Thyroid gland (tissue), 4 donors: ENCODE measurements at regions of chr10 and their contacts with region 1.

Region 1: GRCh38 chr10:114631666-114632417 is 26.2 kb downstream of the ABLIM1 start:
- DNase-seq: peak; percentile 50 to 57
- H3K4me3 ChIP-seq: peak overlapping the region; percentile 15 to 43 (median 32)
- H3K27ac ChIP-seq: peak overlapping the region in 2 of 3 donors; percentile 92 to 95
- H3K4me1 ChIP-seq: peaks cover 33 to 47% of the 10 kb centered on the region in 2 donors
- H3K27me3 ChIP-seq: no peaks in the 10 kb centered on the region
- CTCF ChIP-seq: no peak
- POLR2A ChIP-seq: no peak

Region 2: GRCh38 chr10:114694752-114695151 is 62.9 kb after region 1 on chr10:
- intact Hi-C with region 1: loop called (anchors 10 kb)
- DNase-seq: peak in 1 of 2 donors; percentile 22
- H3K4me3 ChIP-seq: no peak overlapping the region
- H3K27ac ChIP-seq: no peak overlapping the region
- H3K4me1 ChIP-seq: peaks cover 11 to 32% of the 10 kb centered on the region in 2 donors
- H3K27me3 ChIP-seq: no peaks in the 10 kb centered on the region
- CTCF ChIP-seq: peak in 3 of 6 experiments; percentile 23 to 30 (median 28)
- POLR2A ChIP-seq: no peak

Region 3: GRCh38 chr10:115882021-115882420 is 1250.2 kb after region 1 on chr10:
- intact Hi-C with region 1: no loop called
- DNase-seq: no peak
- H3K4me3 ChIP-seq: no peak overlapping the region
- H3K27ac ChIP-seq: no peak overlapping the region
- H3K4me1 ChIP-seq: no peaks in the 10 kb centered on the region
- H3K27me3 ChIP-seq: no peaks in the 10 kb centered on the region
- CTCF ChIP-seq: no peak
- POLR2A ChIP-seq: no peak